HCT116 (cell line): ENCODE measurements at regions of chr19 and their contacts with region 1.

Region 1: GRCh38 chr19:17859533-17860330 is at the start of gene RPL18A:
- DNase-seq: peak; percentile 100
- ATAC-seq: peak; percentile 87
- H3K4me3 ChIP-seq: peak within 1 kb of the TSS; percentile 82 to 93
- H3K27ac ChIP-seq: peak within 1 kb of the TSS; percentile 84
- H3K4me1 ChIP-seq: peaks cover 30 to 54% of the 10 kb centered on the region in 2 experiments
- H3K27me3 ChIP-seq: no peaks in the 10 kb centered on the region
- CTCF ChIP-seq: peak; percentile 70 to 87 (median 78)
- POLR2A ChIP-seq: peak; percentile 43
- RAD21 ChIP-seq: peak; percentile 91
- total RNA-seq, gene RPL18A: 3,525 TPM

Region 2: GRCh38 chr19:17390665-17391370 is 468.9 kb before region 1 on chr19:
- CTCF ChIA-PET with region 1: interaction called, 3 read pairs
- POLR2A ChIA-PET with region 1: no interaction called
- RAD21 ChIA-PET with region 1: no interaction called
- intact Hi-C with region 1: loop called (anchors 5 kb)
- DNase-seq: peak; percentile 80
- ATAC-seq: peak; percentile 96
- H3K4me3 ChIP-seq: peak overlapping the region; percentile 40 to 55
- H3K27ac ChIP-seq: peak overlapping the region; percentile 11; the same call in 1 of the 2 replicates
- H3K4me1 ChIP-seq: peaks cover 11 to 35% of the 10 kb centered on the region in 2 experiments
- H3K27me3 ChIP-seq: no peaks in the 10 kb centered on the region
- CTCF ChIP-seq: peak; percentile 60 to 64 (median 62)
- POLR2A ChIP-seq: no peak
- RAD21 ChIP-seq: peak; percentile 79

Region 3: DNA sequence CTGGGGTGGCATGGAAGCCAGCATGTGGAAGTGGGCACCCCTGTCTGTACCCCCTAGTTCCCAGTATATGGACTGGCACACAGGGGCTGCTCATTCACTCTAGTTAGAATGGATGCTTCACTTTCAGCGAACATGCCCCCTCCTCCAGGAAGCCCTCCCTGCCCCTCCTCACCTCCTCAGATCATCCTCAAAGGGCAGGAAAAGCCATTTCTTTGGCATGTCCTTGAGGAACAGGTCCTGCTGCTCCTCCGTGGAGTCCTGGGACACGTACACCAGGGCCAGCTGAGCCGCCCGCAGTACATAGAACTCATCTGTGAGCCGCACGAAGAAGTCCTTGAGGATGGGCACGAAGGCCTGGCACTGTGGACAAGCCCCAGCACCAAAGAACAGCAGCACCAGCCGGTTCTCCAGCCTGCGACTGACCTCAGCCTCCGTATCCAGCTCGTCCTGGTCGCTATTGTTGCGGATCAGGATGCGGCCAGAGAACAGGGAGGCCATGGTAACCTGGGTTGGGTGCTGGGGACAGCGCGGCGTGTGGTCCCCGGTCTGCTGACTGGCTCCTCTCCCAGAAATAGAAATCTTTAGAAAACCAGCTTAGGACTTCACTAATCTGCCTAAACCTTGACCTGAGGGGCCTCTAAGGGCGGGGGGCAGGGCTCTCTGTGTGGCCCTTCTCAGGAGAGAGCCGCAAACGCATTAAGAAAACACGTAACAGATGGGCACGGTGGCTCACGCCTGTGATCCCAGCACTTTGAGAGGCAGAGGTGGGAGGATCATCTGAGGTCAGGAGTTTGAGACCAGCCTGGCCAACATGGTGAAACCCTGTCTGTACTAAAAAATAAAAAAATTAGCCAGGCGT is 399.1 kb before region 1 on chr19 and contains the start of gene NXNL1:
- CTCF ChIA-PET with region 1: no interaction called
- POLR2A ChIA-PET with region 1: no interaction called
- RAD21 ChIA-PET with region 1: no interaction called
- intact Hi-C with region 1: no loop called
- DNase-seq: no peak
- ATAC-seq: no peak
- H3K4me3 ChIP-seq: no peak within 1 kb of the TSS
- H3K27ac ChIP-seq: no peak within 1 kb of the TSS
- H3K4me1 ChIP-seq: peaks cover 6 to 8% of the 10 kb centered on the region in 2 experiments; a peak in 2 of 4 replicates
- H3K27me3 ChIP-seq: no peaks in the 10 kb centered on the region
- CTCF ChIP-seq: no peak
- POLR2A ChIP-seq: no peak
- RAD21 ChIP-seq: no peak
- total RNA-seq, gene NXNL1: not detected

Region 4: GRCh38 chr19:17703824-17704463 is 155.8 kb before region 1 on chr19:
- CTCF ChIA-PET with region 1: no interaction called
- POLR2A ChIA-PET with region 1: no interaction called
- RAD21 ChIA-PET with region 1: no interaction called
- intact Hi-C with region 1: loop called (anchors 5 kb)
- DNase-seq: peak; percentile 64
- ATAC-seq: peak; percentile 84
- H3K4me3 ChIP-seq: no peak overlapping the region
- H3K27ac ChIP-seq: no peak overlapping the region
- H3K4me1 ChIP-seq: no peaks in the 10 kb centered on the region
- H3K27me3 ChIP-seq: no peaks in the 10 kb centered on the region
- CTCF ChIP-seq: peak; percentile 64 to 93 (median 91)
- POLR2A ChIP-seq: no peak
- RAD21 ChIP-seq: peak; percentile 70

Region 5: DNA sequence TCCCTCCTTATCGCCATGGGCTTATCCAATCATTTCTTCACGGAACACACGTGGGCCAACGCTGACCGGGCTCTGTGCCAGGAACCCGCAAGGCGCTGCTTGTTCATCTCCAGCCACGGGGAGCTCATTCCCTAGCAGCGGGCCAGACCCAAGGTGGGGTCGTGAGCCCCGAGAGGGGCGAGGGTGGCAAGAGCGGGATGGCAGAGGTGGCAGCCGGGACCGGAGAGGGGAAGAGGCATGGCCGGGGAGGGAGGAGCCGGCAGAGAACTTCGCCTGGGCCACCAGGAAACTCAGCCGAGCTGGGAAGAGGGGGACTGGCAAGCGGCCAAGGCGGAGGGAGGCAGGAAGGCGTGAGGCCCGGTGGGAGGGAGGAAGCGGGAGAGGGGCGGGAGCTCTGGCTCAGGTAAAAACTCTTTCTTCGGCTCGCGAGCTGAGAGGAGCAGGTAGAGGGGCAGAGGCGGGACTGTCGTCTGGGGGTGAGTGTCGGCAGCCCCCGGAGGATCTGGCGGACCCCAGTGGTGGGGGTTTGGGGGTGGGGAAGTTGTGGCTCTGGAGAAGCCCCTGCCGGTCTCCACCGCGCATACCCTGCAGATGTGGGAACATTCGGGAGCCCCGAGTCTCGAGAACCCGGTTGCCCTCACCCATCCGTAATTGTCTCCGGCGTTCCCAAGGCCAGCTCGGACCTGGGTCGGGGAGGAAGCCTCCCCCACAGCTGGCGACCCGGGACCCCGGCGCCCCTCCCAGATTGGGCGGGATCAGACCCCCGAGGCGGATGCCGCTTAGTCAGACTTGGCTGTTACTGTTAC is 64.8 kb before region 1 on chr19 and contains the start of gene B3GNT3:
- CTCF ChIA-PET with region 1: interaction called, 5 read pairs
- POLR2A ChIA-PET with region 1: interaction called, 8 read pairs
- RAD21 ChIA-PET with region 1: no interaction called
- intact Hi-C with region 1: loop called (anchors 1 kb)
- DNase-seq: peak; percentile 83
- ATAC-seq: peak; percentile 50
- H3K4me3 ChIP-seq: peak within 1 kb of the TSS; percentile 75 to 90
- H3K27ac ChIP-seq: peak within 1 kb of the TSS; percentile 84
- H3K4me1 ChIP-seq: peaks cover 64 to 92% of the 10 kb centered on the region in 2 experiments
- H3K27me3 ChIP-seq: no peaks in the 10 kb centered on the region
- CTCF ChIP-seq: no peak
- POLR2A ChIP-seq: peak; percentile 42
- RAD21 ChIP-seq: no peak
- total RNA-seq, gene B3GNT3: 22.2 TPM

Region 6: DNA sequence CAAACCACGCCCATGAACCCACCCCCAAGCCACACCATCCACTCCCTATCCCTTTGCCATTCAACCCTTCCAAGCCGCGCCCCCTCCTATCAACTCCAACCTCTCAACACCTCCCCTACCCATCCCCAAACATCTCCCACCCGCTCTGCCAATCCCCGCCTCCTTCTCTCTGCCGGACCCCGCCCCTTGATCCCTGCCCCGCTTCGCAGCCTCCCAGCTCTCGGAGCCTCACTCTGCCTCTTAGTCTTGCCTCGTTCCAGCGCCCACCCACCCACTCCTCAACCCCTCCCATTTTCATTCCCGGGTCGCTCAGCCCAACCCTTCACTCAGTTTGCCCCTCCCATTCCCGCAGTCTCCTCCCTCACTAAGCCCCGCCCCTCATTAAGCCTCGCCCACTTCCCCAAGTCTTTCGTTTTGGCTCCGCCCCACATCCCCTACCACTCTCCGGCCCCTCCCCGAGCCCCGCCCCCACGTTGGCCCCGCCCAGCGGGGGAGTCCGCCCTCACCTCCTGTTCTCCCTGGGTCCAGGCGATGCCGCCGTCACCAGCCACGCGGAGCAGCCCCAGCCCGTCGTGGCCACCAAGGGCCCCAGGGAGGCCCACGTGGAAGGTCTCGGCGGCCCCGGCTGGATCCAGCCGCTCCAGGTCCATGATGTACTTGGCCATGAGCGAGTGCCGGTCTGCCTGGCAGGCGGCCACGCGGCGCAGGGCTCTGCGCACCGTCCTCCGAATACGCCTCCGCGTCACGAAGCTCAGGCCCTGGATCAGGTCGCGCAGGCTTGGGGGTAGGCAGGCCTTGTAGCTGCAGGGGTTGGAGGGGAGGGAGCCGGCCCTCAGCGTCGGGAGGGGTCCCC is 17.7 kb before region 1 on chr19:
- CTCF ChIA-PET with region 1: no interaction called
- POLR2A ChIA-PET with region 1: interaction called, 18 read pairs
- RAD21 ChIA-PET with region 1: interaction called in 1 of 2 experiments, 3 read pairs
- intact Hi-C with region 1: no loop called
- DNase-seq: peak; percentile 92
- ATAC-seq: peak; percentile 89
- H3K4me3 ChIP-seq: peak overlapping the region; percentile 83 to 93
- H3K27ac ChIP-seq: peak overlapping the region; percentile 93
- H3K4me1 ChIP-seq: peaks cover 9 to 30% of the 10 kb centered on the region in 2 experiments; a peak in 3 of 4 replicates
- H3K27me3 ChIP-seq: no peaks in the 10 kb centered on the region
- CTCF ChIP-seq: no peak
- POLR2A ChIP-seq: peak; percentile 64
- RAD21 ChIP-seq: no peak

Region 7: GRCh38 chr19:17873786-17874757 is 14.3 kb after region 1 on chr19:
- CTCF ChIA-PET with region 1: interaction called, 9 read pairs
- POLR2A ChIA-PET with region 1: interaction called, 14 read pairs
- RAD21 ChIA-PET with region 1: interaction called, 5 to 6 read pairs
- intact Hi-C with region 1: no loop called
- DNase-seq: peak; percentile 48
- ATAC-seq: peak; percentile 89
- H3K4me3 ChIP-seq: peak overlapping the region; percentile 22 to 57
- H3K27ac ChIP-seq: peak overlapping the region; percentile 75
- H3K4me1 ChIP-seq: peaks cover 10 to 18% of the 10 kb centered on the region in 2 experiments
- H3K27me3 ChIP-seq: no peaks in the 10 kb centered on the region
- CTCF ChIP-seq: no peak
- POLR2A ChIP-seq: no peak
- RAD21 ChIP-seq: no peak

Region 8: GRCh38 chr19:17996826-17997316 is 137.1 kb after region 1 on chr19:
- CTCF ChIA-PET with region 1: interaction called, 14 read pairs
- POLR2A ChIA-PET with region 1: interaction called, 11 read pairs
- RAD21 ChIA-PET with region 1: interaction called in 1 of 2 experiments, 4 read pairs
- intact Hi-C with region 1: loop called (anchors 5 kb)
- DNase-seq: peak; percentile 48
- ATAC-seq: peak; percentile 67
- H3K4me3 ChIP-seq: peak overlapping the region; percentile 61 to 67
- H3K27ac ChIP-seq: peak overlapping the region; percentile 94
- H3K4me1 ChIP-seq: peaks cover 28 to 50% of the 10 kb centered on the region in 2 experiments
- H3K27me3 ChIP-seq: no peaks in the 10 kb centered on the region
- CTCF ChIP-seq: peak; percentile 93 to 98 (median 93)
- POLR2A ChIP-seq: no peak
- RAD21 ChIP-seq: peak; percentile 99